SK-N-SH (cell line): ENCODE measurements at regions of chr4 and their contacts with region 1.

Region 1: DNA sequence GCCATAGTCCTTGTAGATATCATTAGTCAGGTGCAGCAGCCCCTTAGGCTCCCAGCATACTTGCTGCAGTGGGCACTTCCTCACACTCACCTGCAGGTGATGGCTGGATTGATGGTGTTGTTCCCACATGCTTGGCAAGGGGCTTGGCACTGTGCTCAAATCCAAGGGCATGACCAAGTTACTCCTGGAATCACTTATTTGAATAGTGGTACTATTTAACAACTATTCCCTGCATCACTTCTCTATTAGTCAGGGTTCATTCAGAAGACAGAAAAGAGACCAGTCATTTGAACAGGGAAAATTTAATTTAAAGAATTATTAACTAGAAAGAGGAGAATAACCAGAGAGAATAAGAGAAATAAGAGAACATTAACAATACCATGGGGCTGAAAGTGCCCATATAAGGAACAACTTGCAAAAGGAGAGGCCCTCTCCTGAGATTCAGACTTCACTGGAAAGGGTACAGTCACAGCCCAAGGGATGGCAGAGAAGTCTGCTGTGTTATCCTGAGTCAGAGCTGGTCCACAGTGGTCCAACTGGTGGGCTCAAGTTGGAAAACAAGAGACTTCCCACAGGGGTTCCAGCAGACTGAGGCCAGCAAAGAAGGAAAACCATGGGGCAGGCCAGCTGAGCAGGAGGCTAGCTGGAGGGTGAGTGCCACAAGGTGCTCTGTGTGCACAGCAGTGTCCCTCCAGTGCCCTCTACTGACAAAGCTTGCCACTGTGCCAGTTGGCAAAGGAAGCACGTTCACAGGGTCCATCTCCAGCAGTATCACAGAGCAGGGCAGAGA is 9.8 kb downstream of the SPP1 start:
- DNase-seq: peak; percentile 67
- H3K4me3 ChIP-seq: no peak overlapping the region
- H3K27ac ChIP-seq: no peak overlapping the region
- H3K4me1 ChIP-seq: no peaks in the 10 kb centered on the region
- H3K27me3 ChIP-seq: no peaks in the 10 kb centered on the region
- CTCF ChIP-seq: peak; percentile 64
- EP300 ChIP-seq: no peak
- RAD21 ChIP-seq: peak; percentile 81

Region 2: DNA sequence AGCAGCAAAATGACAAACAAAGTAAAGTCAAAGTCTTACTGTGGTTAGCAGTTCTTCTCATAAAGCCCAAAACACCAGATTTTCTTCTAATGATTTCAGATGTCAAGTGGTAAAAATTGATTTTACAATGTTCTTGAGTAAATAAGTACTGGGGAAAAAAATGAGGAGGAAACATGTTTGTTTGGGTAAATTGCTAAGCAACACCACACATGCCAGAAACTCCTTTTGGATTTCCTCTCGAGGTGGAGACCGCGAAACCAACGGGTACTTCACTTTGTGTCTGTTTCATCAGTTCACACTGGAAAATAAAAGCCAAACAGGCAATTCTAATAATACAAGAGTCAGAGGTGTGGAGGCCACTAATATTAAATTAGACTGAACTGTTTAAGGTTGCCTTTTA is 17.5 kb after region 1 on chr4:
- CTCF ChIA-PET with region 1: interaction called, 12 read pairs
- POLR2A ChIA-PET with region 1: no interaction called
- DNase-seq: no peak
- H3K4me3 ChIP-seq: no peak overlapping the region
- H3K27ac ChIP-seq: no peak overlapping the region
- H3K4me1 ChIP-seq: peaks cover 0 to 4% of the 10 kb centered on the region in 2 experiments; a peak in 1 of 4 replicates
- H3K27me3 ChIP-seq: no peaks in the 10 kb centered on the region
- CTCF ChIP-seq: no peak
- EP300 ChIP-seq: no peak
- RAD21 ChIP-seq: no peak

Region 3: GRCh38 chr4:88251924-88252323 is 266.6 kb after region 1 on chr4:
- CTCF ChIA-PET with region 1: no interaction called
- POLR2A ChIA-PET with region 1: no interaction called
- DNase-seq: no peak
- H3K4me3 ChIP-seq: no peak overlapping the region
- H3K27ac ChIP-seq: no peak overlapping the region
- H3K4me1 ChIP-seq: no peaks in the 10 kb centered on the region
- H3K27me3 ChIP-seq: no peaks in the 10 kb centered on the region
- CTCF ChIP-seq: no peak
- EP300 ChIP-seq: no peak
- RAD21 ChIP-seq: no peak